MCF 10A (cell line): ENCODE measurements at regions of chr17 and their contacts with region 1.

Region 1: GRCh38 chr17:36148559-36149295 is 27.7 kb downstream of the TBC1D3B start:
- DNase-seq: peak; percentile 72
- H3K4me3 Mint-ChIP-seq: no peak overlapping the region
- H3K27ac Mint-ChIP-seq: no peak overlapping the region
- H3K4me1 Mint-ChIP-seq: peaks cover 10% of the 10 kb centered on the region
- H3K27me3 Mint-ChIP-seq: peaks cover 77% of the 10 kb centered on the region
- CTCF ChIP-seq: peak; percentile 99

Region 2: GRCh38 chr17:35849469-35850348 is 299.0 kb before region 1 on chr17:
- CTCF ChIA-PET with region 1: interaction called, 12 read pairs
- POLR2A ChIA-PET with region 1: no interaction called
- intact Hi-C with region 1: loop called (anchors 1 kb)
- DNase-seq: peak; percentile 80
- H3K4me3 Mint-ChIP-seq: no peak overlapping the region
- H3K27ac Mint-ChIP-seq: peak overlapping the region; percentile 12
- H3K4me1 Mint-ChIP-seq: no peaks in the 10 kb centered on the region
- H3K27me3 Mint-ChIP-seq: no peaks in the 10 kb centered on the region
- CTCF ChIP-seq: peak; percentile 81

Region 3: DNA sequence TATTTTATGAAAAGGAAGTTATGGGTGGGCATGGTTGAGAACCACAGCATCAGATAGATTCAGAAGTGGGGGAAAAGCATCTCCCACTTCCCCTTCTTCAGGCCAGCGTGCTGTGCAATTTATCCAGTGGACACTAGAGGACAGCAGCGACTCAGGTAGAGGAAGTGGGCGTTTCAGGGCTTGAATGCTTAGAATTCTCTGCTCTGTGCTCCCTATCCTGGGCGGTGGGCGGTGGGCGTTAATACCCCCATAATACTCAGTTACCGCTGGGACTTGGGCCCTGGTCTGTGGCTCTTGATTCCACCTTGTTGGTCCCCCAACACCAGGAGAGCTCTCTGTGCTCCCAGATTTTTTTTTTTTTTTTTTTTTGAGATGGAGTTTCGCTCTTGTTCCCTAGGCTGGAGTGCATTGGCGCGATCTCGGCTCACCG is 201.6 kb before region 1 on chr17:
- CTCF ChIA-PET with region 1: interaction called, 13 read pairs
- POLR2A ChIA-PET with region 1: no interaction called
- intact Hi-C with region 1: loop called (anchors 1 kb)
- DNase-seq: peak; percentile 69
- H3K4me3 Mint-ChIP-seq: peak overlapping the region; percentile 33
- H3K27ac Mint-ChIP-seq: no peak overlapping the region
- H3K4me1 Mint-ChIP-seq: no peaks in the 10 kb centered on the region
- H3K27me3 Mint-ChIP-seq: peaks cover 15% of the 10 kb centered on the region
- CTCF ChIP-seq: peak; percentile 89

Region 4: DNA sequence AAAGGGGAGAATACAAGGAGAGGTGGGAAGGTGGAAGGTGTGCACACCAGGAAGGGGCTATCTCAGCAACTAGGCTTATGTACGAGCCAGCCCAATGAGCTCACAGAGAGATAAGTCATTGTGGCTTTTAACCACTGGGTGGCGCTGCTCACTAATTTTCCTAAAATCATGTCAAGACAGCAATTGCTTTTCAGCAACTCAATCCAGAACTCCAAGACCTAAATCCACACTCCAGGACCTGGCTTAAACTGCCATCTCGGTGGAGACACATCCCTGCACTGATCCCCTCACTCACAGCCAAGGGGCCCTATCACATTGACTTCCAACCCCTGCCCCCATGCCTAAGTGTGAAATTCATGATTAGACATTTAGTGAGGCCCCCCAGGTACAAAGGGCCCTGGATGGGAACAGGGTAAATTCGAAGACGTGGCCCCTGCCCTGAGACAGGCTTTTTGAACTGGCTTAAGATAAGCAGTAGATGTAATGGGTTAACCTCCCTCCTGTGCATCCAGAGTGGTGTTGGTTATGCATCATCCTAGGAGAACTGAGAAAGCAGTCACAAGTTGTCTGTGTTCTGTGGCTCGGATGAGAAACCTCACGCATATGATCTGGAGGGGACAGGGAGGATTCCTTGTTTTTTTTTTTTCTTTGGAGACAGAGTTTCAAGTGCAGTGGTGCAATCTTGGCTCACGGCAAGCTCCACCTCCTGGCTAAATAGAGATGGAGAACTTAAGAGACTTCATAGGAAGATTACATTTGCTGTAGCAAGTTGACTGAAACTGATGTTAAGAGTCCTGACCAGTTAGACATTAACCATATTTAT is 179.0 kb before region 1 on chr17:
- CTCF ChIA-PET with region 1: interaction called, 284 read pairs
- POLR2A ChIA-PET with region 1: interaction called, 4 read pairs
- intact Hi-C with region 1: loop called (anchors 1 kb)
- DNase-seq: peak; percentile 79
- H3K4me3 Mint-ChIP-seq: no peak overlapping the region
- H3K27ac Mint-ChIP-seq: no peak overlapping the region
- H3K4me1 Mint-ChIP-seq: peaks cover 7% of the 10 kb centered on the region
- H3K27me3 Mint-ChIP-seq: peaks cover 13% of the 10 kb centered on the region
- CTCF ChIP-seq: peak; percentile 87

Region 5: DNA sequence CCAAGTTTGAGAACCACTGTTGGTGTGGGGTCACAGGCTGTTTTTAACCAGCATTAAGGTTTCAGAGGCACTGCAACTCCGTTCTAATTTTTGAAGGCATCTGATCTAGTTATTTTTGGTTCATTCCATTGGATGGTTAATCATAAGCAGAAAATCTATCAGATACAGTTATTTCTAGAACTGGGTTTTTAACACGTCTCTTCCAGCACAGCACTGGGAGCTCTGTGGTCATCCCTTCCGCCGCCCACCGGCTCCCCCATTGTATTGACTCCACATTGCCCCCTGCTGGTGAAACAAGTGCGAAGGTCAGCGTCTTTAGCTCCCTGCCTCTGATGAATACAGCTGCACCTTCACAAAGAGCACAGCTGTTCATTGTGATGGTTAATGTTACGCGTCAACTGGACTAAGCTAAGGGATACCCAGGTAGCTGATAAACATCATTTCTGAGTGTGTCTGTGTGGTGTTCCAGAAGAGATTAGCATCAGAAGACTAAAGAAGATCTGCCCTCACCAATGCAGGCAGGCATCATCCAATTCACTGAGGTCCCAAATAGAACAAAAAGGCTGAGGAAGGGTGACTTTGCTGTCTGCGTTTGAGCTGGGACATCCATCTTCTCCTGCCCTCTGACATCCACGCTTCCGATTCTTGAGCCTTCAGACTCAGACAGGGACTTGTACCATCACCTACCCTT is 76.2 kb before region 1 on chr17:
- CTCF ChIA-PET with region 1: interaction called, 14 read pairs
- POLR2A ChIA-PET with region 1: no interaction called
- intact Hi-C with region 1: no loop called
- DNase-seq: peak; percentile 60
- H3K4me3 Mint-ChIP-seq: no peak overlapping the region
- H3K27ac Mint-ChIP-seq: no peak overlapping the region
- H3K4me1 Mint-ChIP-seq: no peaks in the 10 kb centered on the region
- H3K27me3 Mint-ChIP-seq: peaks cover 16% of the 10 kb centered on the region
- CTCF ChIP-seq: peak; percentile 54

Region 6: DNA sequence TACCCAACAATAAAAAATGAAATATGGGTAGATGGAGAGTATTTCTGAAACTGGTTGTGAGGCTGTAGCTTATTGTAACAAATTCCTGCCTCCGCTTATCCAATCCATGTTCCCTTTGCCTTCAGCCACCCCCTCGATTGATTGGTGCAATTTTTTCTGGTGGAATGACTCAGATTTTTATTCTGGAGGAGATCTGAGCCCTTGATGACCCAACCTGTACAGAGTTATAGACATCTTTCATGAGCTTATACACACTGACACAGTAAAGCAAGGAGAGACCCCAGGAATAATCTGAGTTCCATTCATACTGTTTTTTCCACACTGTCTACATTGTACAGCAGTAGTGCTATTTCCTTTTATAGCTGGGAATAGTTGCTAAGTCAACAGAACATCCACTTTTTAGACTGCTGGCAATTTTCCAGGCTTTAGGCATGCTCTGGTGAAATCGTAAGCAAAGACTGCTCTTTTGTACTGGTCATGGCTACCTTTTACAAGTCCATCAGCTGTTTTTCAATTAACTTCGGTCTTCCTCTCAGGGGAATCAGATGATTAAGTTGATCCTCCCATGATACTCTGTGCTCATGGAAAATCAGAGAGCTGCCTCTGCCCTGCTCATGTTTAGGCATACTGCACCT is 15.0 kb before region 1 on chr17:
- CTCF ChIA-PET with region 1: interaction called, 109 read pairs
- POLR2A ChIA-PET with region 1: interaction called, 3 read pairs
- intact Hi-C with region 1: no loop called
- DNase-seq: peak; percentile 44
- H3K4me3 Mint-ChIP-seq: no peak overlapping the region
- H3K27ac Mint-ChIP-seq: no peak overlapping the region
- H3K4me1 Mint-ChIP-seq: no peaks in the 10 kb centered on the region
- H3K27me3 Mint-ChIP-seq: peaks cover 85% of the 10 kb centered on the region
- CTCF ChIP-seq: no peak